ENCODE measurements at regions of chr3 and their contacts with region 1.

Region 1: DNA sequence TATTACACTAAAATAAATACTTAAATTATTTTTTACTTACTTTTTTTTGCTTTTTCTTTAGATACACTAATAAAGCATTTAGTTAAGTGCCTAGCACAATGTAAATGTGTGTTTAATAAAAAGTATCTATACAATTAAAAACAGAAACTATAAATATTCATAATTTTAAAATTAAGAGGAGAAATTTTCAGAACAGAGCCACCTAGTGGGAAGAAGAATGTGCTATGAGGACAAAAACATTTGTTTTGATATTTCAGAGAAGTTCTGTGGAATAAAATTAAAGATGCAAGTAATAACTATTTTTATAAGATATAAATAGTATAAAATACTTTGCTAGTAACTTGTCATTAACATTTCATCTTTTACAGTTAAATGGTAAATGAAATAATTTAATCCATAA is 33.6 kb upstream of the PLSCR5 start:
- DNase-seq: no peak
- H3K4me3 ChIP-seq: no peak overlapping the region
- H3K27ac ChIP-seq: no peak overlapping the region
- H3K4me1 ChIP-seq: no peaks in the 10 kb centered on the region
- H3K27me3 ChIP-seq: no peaks in the 10 kb centered on the region
- CTCF ChIP-seq: peak in 2 of 3 experiments; percentile 27 to 38

Region 2: GRCh38 chr3:146589899-146590508 is 48.7 kb before region 1 on chr3:
- intact Hi-C with region 1: loop called (anchors 5 kb)
- DNase-seq: no peak
- H3K4me3 ChIP-seq: no peak overlapping the region
- H3K27ac ChIP-seq: no peak overlapping the region
- H3K4me1 ChIP-seq: no peaks in the 10 kb centered on the region
- H3K27me3 ChIP-seq: no peaks in the 10 kb centered on the region
- CTCF ChIP-seq: peak in 2 of 3 experiments; percentile 33 to 58